Gastrocnemius medialis (tissue), 4 donors: ENCODE measurements at regions of chrX and their contacts with region 1.

Region 1: GRCh38 chrX:46573331-46573891 is at the start of gene CHST7:
- DNase-seq: peak in 1 of 2 donors; percentile 33
- ATAC-seq: peak; percentile 51 to 68
- H3K4me3 ChIP-seq: peak within 1 kb of the TSS; percentile 52 to 60 (median 58)
- H3K27ac ChIP-seq: peak within 1 kb of the TSS; percentile 41 to 62 (median 51)
- H3K4me1 ChIP-seq: peaks cover 0 to 3% of the 10 kb centered on the region in 2 donors
- H3K27me3 ChIP-seq: peaks cover 0 to 8% (median 6%) of the 10 kb centered on the region in 3 donors
- CTCF ChIP-seq: peak in 1 of 5 experiments; percentile 20
- POLR2A ChIP-seq: peak; percentile 27 to 57
- total RNA-seq, gene CHST7: 15.1 to 16.9 (median 15.8) TPM

Region 2: GRCh38 chrX:46642145-46642544 is 68.7 kb after region 1 on chrX:
- in situ Hi-C with region 1: no loop called
- intact Hi-C with region 1: loop called (anchors 5 kb)
- DNase-seq: no peak
- ATAC-seq: no peak
- H3K4me3 ChIP-seq: no peak overlapping the region
- H3K27ac ChIP-seq: no peak overlapping the region
- H3K4me1 ChIP-seq: peaks cover 0 to 3% of the 10 kb centered on the region in 2 donors
- H3K27me3 ChIP-seq: no peaks in the 10 kb centered on the region
- CTCF ChIP-seq: peak in 3 of 5 experiments; percentile 17 to 38 (median 33)
- POLR2A ChIP-seq: no peak

Region 3: GRCh38 chrX:46686003-46686645 is 112.7 kb after region 1 on chrX:
- in situ Hi-C with region 1: no loop called
- intact Hi-C with region 1: loop called (anchors 5 kb)
- DNase-seq: no peak
- ATAC-seq: no peak
- H3K4me3 ChIP-seq: no peak overlapping the region
- H3K27ac ChIP-seq: no peak overlapping the region
- H3K4me1 ChIP-seq: peaks cover 0 to 4% of the 10 kb centered on the region in 2 donors
- H3K27me3 ChIP-seq: no peaks in the 10 kb centered on the region
- CTCF ChIP-seq: peak in 3 of 5 experiments; percentile 40 to 70 (median 54)
- POLR2A ChIP-seq: no peak